ENCODE measurements at regions of chr2 and their contacts with region 1.

Region 1: GRCh38 chr2:32189011-32189410 is 23.3 kb downstream of the SLC30A6 start:
- DNase-seq: no peak
- H3K4me3 ChIP-seq: no peak overlapping the region
- H3K27ac ChIP-seq: no peak overlapping the region
- H3K4me1 ChIP-seq: no peaks in the 10 kb centered on the region
- H3K27me3 ChIP-seq: no peaks in the 10 kb centered on the region
- CTCF ChIP-seq: no peak
- EP300 ChIP-seq: no peak
- POLR2A ChIP-seq: no peak

Region 2: GRCh38 chr2:32124660-32125059 is 64.4 kb before region 1 on chr2:
- intact Hi-C with region 1: loop called in 1 of 4 experiments (anchors 5 kb)
- DNase-seq: no peak
- H3K4me3 ChIP-seq: no peak overlapping the region
- H3K27ac ChIP-seq: no peak overlapping the region
- H3K4me1 ChIP-seq: no peaks in the 10 kb centered on the region
- H3K27me3 ChIP-seq: no peaks in the 10 kb centered on the region
- CTCF ChIP-seq: no peak
- EP300 ChIP-seq: no peak
- POLR2A ChIP-seq: no peak

Measured in ovary (tissue), 10 donors.